ENCODE measurements at regions of chr7 and their contacts with region 1.

Region 1: DNA sequence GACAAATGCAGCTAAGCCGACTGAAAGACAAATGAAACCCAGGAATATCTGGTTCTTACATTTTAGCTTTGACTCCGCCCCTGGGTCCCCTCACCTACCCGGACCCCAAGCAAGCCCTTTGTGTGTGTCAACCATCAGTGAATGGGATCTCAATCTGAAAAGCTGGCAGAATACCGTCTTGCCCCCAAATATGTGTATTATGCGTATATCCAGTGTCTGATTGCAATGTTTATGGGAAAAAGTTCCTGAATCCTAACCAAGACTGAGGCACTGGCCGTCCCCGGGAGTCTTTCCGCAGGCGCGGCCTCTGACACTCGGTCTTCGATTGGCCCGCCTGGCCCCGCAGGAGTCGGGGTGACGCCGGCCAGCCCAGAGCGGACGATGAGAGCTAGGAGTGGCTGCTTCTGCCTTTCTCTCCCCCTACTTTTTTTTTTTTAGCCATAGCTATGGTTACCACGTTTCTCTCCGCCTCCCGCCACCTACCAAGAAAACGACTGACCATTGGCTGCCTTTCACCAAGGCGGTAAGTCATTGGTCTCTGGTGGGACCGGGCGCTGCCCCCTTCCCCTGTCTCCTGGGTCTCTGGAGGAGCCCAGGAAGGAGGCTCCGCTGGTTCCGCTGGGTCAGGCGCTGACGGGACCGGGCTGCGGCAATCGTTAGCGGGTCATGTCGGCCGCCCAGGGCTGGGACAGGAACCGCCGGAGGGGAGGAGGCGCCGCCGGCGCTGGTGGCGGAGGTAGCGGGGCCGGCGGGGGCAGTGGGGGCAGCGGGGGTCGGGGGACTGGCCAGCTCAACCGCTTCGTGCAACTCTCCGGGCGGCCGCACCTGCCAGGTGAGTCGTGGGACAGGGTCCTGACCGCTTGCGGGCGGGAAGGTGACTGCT is at the start of gene KLHDC10:
- DNase-seq: peak; percentile 84 to 98 (median 96)
- ATAC-seq: peak; percentile 99
- H3K4me3 ChIP-seq: peak within 1 kb of the TSS; percentile 54
- H3K4me3 Mint-ChIP-seq: peak within 1 kb of the TSS; percentile 80 to 95 (median 92)
- H3K27ac ChIP-seq: peak within 1 kb of the TSS; percentile 82
- H3K27ac Mint-ChIP-seq: peak within 1 kb of the TSS; percentile 81 to 97 (median 90)
- H3K4me1 ChIP-seq: peaks cover 12 to 18% of the 10 kb centered on the region in 2 donors
- H3K4me1 Mint-ChIP-seq: peaks cover 34 to 51% (median 42%) of the 10 kb centered on the region in 7 donors
- H3K27me3 ChIP-seq: no peaks in the 10 kb centered on the region
- H3K27me3 Mint-ChIP-seq: peaks cover 0 to 2% (median 0%) of the 10 kb centered on the region in 5 donors
- total RNA-seq, gene KLHDC10: 14.5 to 20.4 (median 17.3) TPM

Region 2: DNA sequence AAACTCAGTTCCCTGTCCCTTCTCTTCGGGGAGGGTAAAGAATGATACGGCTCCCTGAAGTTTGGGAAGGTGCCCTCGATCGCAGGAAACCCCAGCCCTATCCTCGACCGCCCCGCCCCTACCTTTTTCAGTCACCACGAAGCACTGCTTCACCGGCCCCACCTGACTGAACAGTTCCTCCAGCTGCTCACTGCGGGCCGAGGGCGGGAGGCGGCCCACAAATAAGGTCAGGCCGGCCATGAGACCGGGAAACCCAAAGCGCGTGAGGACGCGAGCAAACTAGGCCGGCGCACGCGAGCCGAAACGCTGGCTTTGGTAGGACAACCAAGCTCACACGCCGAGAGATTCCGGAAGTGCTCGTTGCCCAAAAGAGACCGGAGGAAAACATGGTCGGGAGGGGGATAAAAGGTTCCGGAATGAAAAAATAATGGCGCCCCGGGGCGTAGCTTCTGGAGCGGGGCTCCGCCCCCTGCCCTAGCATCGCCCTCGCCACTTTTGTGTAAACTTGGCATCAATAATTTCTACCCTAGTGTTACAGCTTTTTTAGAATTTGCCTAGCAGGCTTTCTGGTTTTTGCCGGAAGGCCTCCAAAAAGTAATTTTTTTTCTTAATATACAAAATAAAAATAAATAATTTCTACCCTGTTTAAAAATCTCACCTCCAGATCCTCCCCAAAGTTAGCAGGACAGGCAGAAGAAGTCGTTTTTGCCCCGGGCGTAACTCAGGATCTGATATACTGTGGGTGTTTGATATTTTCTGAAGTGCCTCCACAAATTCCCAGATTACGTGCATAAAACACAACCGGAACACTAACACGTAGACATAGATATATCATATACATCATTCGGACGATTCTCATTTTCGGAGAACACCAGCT is 1726.4 kb before region 1 on chr7 and contains the start of gene RBM28:
- CTCF ChIA-PET with region 1: no interaction called
- POLR2A ChIA-PET with region 1: no interaction called
- intact Hi-C with region 1: loop called in 1 of 2 experiments (anchors 1 kb)
- DNase-seq: peak; percentile 80 to 93 (median 90)
- ATAC-seq: peak; percentile 98
- H3K4me3 ChIP-seq: peak within 1 kb of the TSS; percentile 97
- H3K4me3 Mint-ChIP-seq: peak within 1 kb of the TSS; percentile 89 to 98 (median 96)
- H3K27ac ChIP-seq: peak within 1 kb of the TSS; percentile 83
- H3K27ac Mint-ChIP-seq: peak within 1 kb of the TSS; percentile 83 to 96 (median 93)
- H3K4me1 ChIP-seq: peaks cover 16 to 20% of the 10 kb centered on the region in 2 donors
- H3K4me1 Mint-ChIP-seq: peaks cover 19 to 44% (median 34%) of the 10 kb centered on the region in 7 donors
- H3K27me3 ChIP-seq: no peaks in the 10 kb centered on the region
- H3K27me3 Mint-ChIP-seq: peaks cover 0 to 15% (median 7%) of the 10 kb centered on the region in 5 donors
- total RNA-seq, gene RBM28: 30.1 to 51.0 (median 43.5) TPM

Region 3: GRCh38 chr7:130037703-130038102 is 32.5 kb before region 1 on chr7:
- CTCF ChIA-PET with region 1: interaction called, 5 read pairs
- POLR2A ChIA-PET with region 1: no interaction called
- intact Hi-C with region 1: loop called in 1 of 2 experiments (anchors 1 kb)
- DNase-seq: no peak
- ATAC-seq: no peak
- H3K4me3 ChIP-seq: no peak overlapping the region
- H3K4me3 Mint-ChIP-seq: no peak overlapping the region
- H3K27ac ChIP-seq: no peak overlapping the region
- H3K27ac Mint-ChIP-seq: no peak overlapping the region
- H3K4me1 ChIP-seq: no peaks in the 10 kb centered on the region
- H3K4me1 Mint-ChIP-seq: peaks cover 0 to 6% (median 0%) of the 10 kb centered on the region in 7 donors
- H3K27me3 ChIP-seq: no peaks in the 10 kb centered on the region
- H3K27me3 Mint-ChIP-seq: no peaks in the 10 kb centered on the region

Region 4: DNA sequence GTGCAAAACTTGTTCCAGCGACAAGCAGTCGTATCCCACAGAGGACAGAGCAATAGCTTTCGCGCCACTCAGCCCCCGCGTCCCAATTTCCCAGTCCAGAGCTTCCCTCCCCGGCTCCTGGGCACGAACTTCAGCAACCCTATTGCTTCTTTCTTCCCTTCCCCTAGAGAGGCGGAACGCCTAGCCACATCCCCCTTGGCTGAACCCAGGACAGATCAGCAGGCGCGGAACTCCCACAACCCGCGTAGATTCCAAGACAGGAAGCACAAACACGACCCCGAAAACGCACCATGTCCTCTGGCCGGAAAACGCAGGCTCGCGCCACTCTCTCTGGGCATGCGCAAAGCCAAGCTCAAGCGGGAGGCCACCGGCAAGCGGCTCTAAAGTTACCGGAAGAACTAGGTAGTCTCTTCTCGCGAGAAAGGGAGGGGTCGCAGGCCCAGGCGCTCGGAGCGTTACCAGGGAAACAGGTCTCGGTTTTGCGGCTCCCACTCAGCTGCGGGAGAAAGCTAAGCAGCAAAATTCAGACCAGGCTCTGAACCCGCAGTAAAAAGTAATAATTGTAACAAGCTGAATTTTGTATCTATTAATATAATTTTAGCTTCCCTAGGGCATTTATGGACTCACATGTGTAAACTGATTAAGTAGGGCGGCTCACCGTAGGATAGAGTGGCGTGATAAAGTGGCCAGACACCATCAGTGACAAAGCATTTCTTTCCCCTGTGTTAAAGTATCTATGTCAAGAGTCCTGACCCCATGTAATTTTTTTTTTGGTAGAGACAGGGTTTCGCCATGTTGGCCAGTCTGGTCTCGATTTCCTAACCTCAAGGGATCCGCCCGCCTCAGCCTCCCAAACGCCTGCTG is 135.1 kb after region 1 on chr7 and contains the start of gene TMEM209:
- CTCF ChIA-PET with region 1: interaction called, 3 read pairs
- POLR2A ChIA-PET with region 1: interaction called, 11 read pairs
- intact Hi-C with region 1: loop called (anchors 1 kb)
- DNase-seq: peak; percentile 80 to 96 (median 93)
- ATAC-seq: peak; percentile 98
- H3K4me3 ChIP-seq: peak within 1 kb of the TSS; percentile 89
- H3K4me3 Mint-ChIP-seq: peak within 1 kb of the TSS; percentile 98 to 100 (median 100)
- H3K27ac ChIP-seq: peak within 1 kb of the TSS; percentile 83
- H3K27ac Mint-ChIP-seq: peak within 1 kb of the TSS; percentile 97 to 100 (median 99)
- H3K4me1 ChIP-seq: peaks cover 11 to 14% of the 10 kb centered on the region in 2 donors
- H3K4me1 Mint-ChIP-seq: peaks cover 13 to 43% (median 37%) of the 10 kb centered on the region in 7 donors
- H3K27me3 ChIP-seq: no peaks in the 10 kb centered on the region
- H3K27me3 Mint-ChIP-seq: peaks cover 0 to 9% (median 0%) of the 10 kb centered on the region in 5 donors
- total RNA-seq, gene TMEM209: 18.8 to 37.3 (median 35.1) TPM

Region 5: GRCh38 chr7:130305433-130306042 is 235.3 kb after region 1 on chr7:
- CTCF ChIA-PET with region 1: no interaction called
- POLR2A ChIA-PET with region 1: no interaction called
- intact Hi-C with region 1: no loop called
- DNase-seq: no peak
- ATAC-seq: no peak
- H3K4me3 ChIP-seq: no peak overlapping the region
- H3K4me3 Mint-ChIP-seq: no peak overlapping the region
- H3K27ac ChIP-seq: no peak overlapping the region
- H3K27ac Mint-ChIP-seq: peak overlapping the region in 1 of 9 donors; percentile 14
- H3K4me1 ChIP-seq: no peaks in the 10 kb centered on the region
- H3K4me1 Mint-ChIP-seq: peaks cover 0 to 2% (median 0%) of the 10 kb centered on the region in 7 donors
- H3K27me3 ChIP-seq: no peaks in the 10 kb centered on the region
- H3K27me3 Mint-ChIP-seq: peaks cover 0 to 4% (median 0%) of the 10 kb centered on the region in 5 donors

Region 6: GRCh38 chr7:130560970-130561369 is 490.8 kb after region 1 on chr7:
- CTCF ChIA-PET with region 1: interaction called, 5 read pairs
- POLR2A ChIA-PET with region 1: no interaction called
- intact Hi-C with region 1: loop called (anchors 1 kb)
- DNase-seq: peak in 5 of 9 donors; percentile 3 to 29 (median 13)
- ATAC-seq: peak; percentile 57
- H3K4me3 ChIP-seq: no peak overlapping the region
- H3K4me3 Mint-ChIP-seq: no peak overlapping the region
- H3K27ac ChIP-seq: no peak overlapping the region
- H3K27ac Mint-ChIP-seq: peak overlapping the region in 1 of 9 donors; percentile 52
- H3K4me1 ChIP-seq: no peaks in the 10 kb centered on the region
- H3K4me1 Mint-ChIP-seq: peaks cover 0 to 7% (median 0%) of the 10 kb centered on the region in 7 donors
- H3K27me3 ChIP-seq: no peaks in the 10 kb centered on the region
- H3K27me3 Mint-ChIP-seq: no peaks in the 10 kb centered on the region

Region 7: DNA sequence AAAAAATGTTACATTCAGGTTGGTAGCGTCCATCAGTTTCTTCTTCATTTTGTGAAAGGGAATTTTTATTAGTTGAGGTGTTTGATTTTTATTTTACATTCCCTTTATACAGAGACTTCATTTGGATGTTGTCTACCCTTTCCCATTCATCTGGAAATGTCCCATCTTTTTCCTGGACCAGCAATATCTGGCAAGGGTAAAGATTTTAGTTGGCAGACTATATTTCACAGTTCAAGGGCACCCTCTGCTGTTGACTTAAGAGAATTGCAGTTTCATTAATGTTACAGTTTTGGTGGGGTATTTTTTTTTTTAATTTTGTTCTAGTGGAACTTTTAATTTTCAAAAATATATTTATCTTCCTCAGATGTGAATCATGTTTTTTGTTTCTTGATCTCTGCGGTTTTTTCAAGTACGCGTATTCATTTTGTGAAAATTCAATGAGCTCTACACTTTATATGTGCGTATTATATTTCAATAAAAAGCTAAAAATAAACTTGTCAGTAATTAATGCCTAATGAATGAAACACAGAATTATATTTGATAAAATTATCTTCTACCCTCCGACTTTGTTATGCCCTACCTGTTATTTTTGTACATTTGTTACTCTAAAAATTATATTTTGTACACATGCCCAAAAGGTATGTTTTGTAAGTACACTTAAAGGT is 761.7 kb after region 1 on chr7:
- CTCF ChIA-PET with region 1: interaction called, 4 read pairs
- POLR2A ChIA-PET with region 1: no interaction called
- intact Hi-C with region 1: loop called (anchors 1 to 2 kb)
- DNase-seq: peak in 5 of 9 donors; percentile 15 to 34 (median 25)
- ATAC-seq: peak; percentile 46
- H3K4me3 ChIP-seq: no peak overlapping the region
- H3K4me3 Mint-ChIP-seq: no peak overlapping the region
- H3K27ac ChIP-seq: no peak overlapping the region
- H3K27ac Mint-ChIP-seq: peak overlapping the region in 2 of 9 donors; percentile 16 to 42
- H3K4me1 ChIP-seq: no peaks in the 10 kb centered on the region
- H3K4me1 Mint-ChIP-seq: peaks cover 0 to 6% (median 0%) of the 10 kb centered on the region in 7 donors
- H3K27me3 ChIP-seq: no peaks in the 10 kb centered on the region
- H3K27me3 Mint-ChIP-seq: peaks cover 3 to 22% (median 10%) of the 10 kb centered on the region in 5 donors

Measured in naive thymus-derived CD4-positive, alpha-beta T cell (primary cell).